Caco-2 (cell line): ENCODE measurements at regions of chrX and their contacts with region 1.

Region 1: DNA sequence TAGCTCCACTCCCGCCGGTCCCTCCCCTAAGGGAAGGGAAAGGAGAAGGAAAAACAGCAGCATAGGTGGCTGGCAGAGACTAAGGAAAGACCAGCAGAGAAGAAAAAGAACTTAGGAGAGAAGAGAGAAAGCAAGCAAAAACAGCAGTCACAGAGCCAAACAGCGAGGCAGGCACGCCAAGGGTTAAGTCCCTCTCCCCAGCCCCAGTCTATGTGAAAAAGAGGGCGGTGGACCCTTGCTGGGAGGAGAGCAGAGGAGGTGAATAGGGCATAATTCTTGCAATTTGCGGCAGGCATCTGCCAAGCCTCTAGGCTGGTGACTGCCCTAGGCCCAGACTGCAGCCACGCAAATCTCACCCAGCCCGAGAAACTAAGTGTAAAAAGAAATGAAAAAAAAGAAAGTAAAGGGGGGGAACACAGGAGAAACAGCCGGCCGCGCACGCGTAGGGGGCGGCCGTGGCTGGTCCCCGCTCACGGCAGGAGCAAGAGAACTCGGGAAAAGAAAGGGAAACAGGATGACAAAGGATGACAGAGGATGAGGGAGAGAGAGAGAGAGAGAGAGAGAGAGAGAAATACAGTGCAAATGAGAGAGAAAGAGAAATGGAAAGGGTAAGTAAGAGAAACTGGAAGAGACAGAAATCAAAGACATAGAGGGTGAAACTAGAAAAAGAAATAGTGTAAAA is 48.6 kb downstream of the MAGEA9 start:
- DNase-seq: no peak
- H3K4me3 ChIP-seq: peak overlapping the region; percentile 8; the same call in 1 of the 2 replicates
- H3K4me3 Mint-ChIP-seq: peak overlapping the region; percentile 28
- H3K27ac Mint-ChIP-seq: no peak overlapping the region
- H3K4me1 ChIP-seq: no peaks in the 10 kb centered on the region
- H3K4me1 Mint-ChIP-seq: peaks cover 12% of the 10 kb centered on the region
- H3K27me3 ChIP-seq: no peaks in the 10 kb centered on the region
- H3K27me3 Mint-ChIP-seq: peaks cover 28% of the 10 kb centered on the region
- CTCF ChIP-seq: no peak

Region 2: GRCh38 chrX:149818652-149819051 is 11.7 kb before region 1 on chrX:
- CTCF ChIA-PET with region 1: no interaction called
- POLR2A ChIA-PET with region 1: no interaction called
- intact Hi-C with region 1: loop called (anchors 2 kb)
- DNase-seq: no peak
- H3K4me3 ChIP-seq: no peak overlapping the region
- H3K4me3 Mint-ChIP-seq: no peak overlapping the region
- H3K27ac Mint-ChIP-seq: no peak overlapping the region
- H3K4me1 ChIP-seq: no peaks in the 10 kb centered on the region; the same call in 1 of the 2 replicates
- H3K4me1 Mint-ChIP-seq: no peaks in the 10 kb centered on the region
- H3K27me3 ChIP-seq: no peaks in the 10 kb centered on the region; the same call in 1 of the 2 replicates
- H3K27me3 Mint-ChIP-seq: peaks cover 8% of the 10 kb centered on the region
- CTCF ChIP-seq: no peak

Region 3: GRCh38 chrX:149987613-149988012 is 157.3 kb after region 1 on chrX:
- CTCF ChIA-PET with region 1: interaction called, 24 read pairs
- POLR2A ChIA-PET with region 1: no interaction called
- intact Hi-C with region 1: no loop called
- DNase-seq: no peak
- H3K4me3 ChIP-seq: no peak overlapping the region
- H3K4me3 Mint-ChIP-seq: no peak overlapping the region
- H3K27ac Mint-ChIP-seq: no peak overlapping the region
- H3K4me1 ChIP-seq: no peaks in the 10 kb centered on the region
- H3K4me1 Mint-ChIP-seq: no peaks in the 10 kb centered on the region
- H3K27me3 ChIP-seq: no peaks in the 10 kb centered on the region
- H3K27me3 Mint-ChIP-seq: no peaks in the 10 kb centered on the region
- CTCF ChIP-seq: no peak